Activated B cell treated with CpG ODN at 0.5 μM for 24 hours (primary cell): ENCODE measurements at regions of chr2 and their contacts with region 1.

Region 1: DNA sequence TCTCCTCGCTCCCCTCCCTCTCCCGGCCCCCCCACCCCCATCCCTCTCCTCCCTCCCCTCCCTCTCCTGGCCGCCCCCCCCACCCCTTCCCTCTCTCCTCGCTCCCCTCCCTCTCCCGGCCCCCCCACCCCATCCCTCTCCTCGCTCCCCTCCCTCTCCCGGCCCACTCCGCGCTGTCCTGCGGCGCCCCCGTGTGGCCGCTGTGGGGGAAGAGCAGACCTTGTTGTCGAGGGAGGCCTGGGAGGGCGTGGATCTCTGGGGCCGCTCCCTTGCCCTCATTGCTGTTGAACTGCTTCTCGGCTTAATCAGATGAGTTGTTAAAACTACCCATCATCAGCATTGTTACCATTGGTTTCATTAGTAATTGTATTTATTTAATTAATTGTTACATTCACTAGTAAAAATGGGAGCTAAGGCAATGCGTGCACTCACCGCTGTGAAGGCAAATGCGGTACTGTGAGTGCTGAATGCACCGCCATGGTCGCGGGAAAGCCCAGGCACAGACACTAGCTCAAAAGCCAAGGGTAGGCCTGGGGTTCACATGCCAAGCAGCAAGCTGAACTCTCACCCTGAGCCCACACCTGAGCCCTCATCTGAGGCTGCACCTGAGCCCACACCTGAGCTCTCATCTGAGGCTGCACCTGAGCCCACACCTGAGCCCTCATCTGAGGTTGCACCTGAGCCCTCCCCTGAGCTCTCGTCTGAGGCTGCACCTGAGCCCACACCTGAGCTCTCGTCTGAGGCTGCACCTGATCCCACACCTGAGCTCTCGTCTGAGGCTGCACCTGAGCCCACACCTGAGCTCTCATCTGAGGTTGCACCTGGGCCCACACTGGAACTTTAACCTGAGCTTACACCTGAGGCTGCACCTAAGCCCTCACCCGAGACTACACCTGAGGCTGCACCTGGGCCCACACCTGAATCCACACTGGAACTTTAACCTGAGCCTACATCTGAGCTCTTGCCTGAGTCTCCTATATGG is 8.8 kb downstream of the RTP5 start:
- DNase-seq: peak; percentile 73
- ATAC-seq: no peak
- H3K4me3 Mint-ChIP-seq: no peak overlapping the region
- H3K27ac Mint-ChIP-seq: no peak overlapping the region
- H3K4me1 Mint-ChIP-seq: peaks cover 28% of the 10 kb centered on the region
- H3K27me3 Mint-ChIP-seq: no peaks in the 10 kb centered on the region
- CTCF ChIP-seq: no peak

Region 2: DNA sequence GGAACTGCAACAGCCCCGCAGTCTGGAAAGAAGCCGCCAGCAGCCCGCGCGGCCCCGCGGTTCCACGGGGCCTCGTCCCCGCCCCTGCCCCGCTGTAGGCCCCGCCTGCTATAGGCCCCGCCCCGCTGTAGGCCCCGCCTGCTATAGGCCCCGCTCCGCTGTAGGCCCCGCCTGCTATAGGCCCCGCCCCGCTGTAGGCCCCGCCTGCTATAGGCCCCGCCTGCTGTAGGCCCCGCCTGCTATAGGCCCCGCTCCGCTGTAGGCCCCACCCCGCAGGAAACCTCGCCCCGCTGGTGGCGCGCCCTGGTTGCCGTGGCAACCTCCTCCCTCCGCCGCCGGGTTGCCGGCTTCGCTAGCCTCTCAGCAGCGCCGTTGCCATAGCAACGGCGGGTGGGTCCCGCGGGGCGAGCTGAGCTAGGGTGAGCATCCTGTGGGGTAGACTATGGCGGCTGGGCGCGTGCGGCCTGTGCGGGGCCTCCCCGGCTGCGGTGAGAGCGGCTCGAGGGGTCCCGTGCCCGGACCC is 1046.0 kb before region 1 on chr2:
- CTCF ChIA-PET with region 1: no interaction called
- POLR2A ChIA-PET with region 1: no interaction called
- intact Hi-C with region 1: loop called (anchors 2 kb)
- DNase-seq: peak; percentile 89
- ATAC-seq: peak; percentile 94
- H3K4me3 Mint-ChIP-seq: peak overlapping the region; percentile 55
- H3K27ac Mint-ChIP-seq: no peak overlapping the region
- H3K4me1 Mint-ChIP-seq: peaks cover 5% of the 10 kb centered on the region
- H3K27me3 Mint-ChIP-seq: peaks cover 18% of the 10 kb centered on the region
- CTCF ChIP-seq: no peak

Region 3: DNA sequence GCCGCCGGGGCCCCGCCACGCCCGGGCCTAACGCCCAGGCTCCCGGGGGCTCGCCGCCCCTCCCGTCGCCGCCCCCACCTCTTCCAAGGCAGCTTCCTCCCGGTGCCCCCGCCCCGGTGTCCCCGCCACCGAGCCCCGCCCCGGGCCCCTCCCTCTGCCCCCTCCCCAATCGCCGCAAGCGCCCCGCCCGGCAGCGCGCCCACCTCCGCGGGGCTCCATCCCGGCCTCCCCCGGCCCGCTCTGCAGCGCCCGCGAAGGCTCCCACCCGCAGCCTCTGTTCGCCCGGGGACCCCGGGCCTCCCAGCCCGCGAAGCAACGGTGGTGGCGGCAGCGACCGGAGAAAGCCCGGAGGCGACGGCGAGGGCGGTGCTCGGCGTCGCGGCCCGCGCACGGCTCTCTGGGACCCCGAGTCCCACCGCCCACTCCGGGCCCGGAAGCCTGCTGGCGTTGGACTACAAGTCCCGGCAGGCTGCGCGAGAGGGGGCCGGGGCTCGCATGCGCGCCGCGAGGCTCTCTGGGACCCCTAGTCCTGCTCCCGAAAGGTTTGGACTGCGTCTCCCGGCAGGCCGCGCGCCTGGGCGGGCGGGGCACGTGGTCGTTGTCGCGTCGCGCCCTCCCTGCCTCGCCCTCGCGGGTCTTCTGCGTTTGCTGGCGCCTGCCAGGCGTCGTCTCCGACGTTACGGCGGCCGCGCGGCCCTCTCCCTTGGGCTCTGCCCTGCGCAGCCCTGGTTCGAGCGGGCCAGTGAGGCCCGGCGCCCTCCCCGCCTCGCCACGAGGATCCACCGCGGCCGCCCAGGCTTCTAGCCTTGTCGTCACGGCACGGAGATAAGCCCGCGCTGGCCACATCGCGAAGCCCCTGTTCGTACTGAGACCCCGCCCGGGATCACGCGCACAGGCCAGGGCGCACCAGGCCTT is 369.8 kb before region 1 on chr2 and contains the start of gene STK25:
- CTCF ChIA-PET with region 1: no interaction called
- POLR2A ChIA-PET with region 1: interaction called, 3 read pairs
- intact Hi-C with region 1: loop called (anchors 1 kb)
- DNase-seq: peak; percentile 98
- ATAC-seq: peak; percentile 93
- H3K4me3 Mint-ChIP-seq: peak within 1 kb of the TSS; percentile 84
- H3K27ac Mint-ChIP-seq: peak within 1 kb of the TSS; percentile 68
- H3K4me1 Mint-ChIP-seq: peaks cover 23% of the 10 kb centered on the region
- H3K27me3 Mint-ChIP-seq: no peaks in the 10 kb centered on the region
- CTCF ChIP-seq: no peak
- total RNA-seq, gene STK25: 123 and 151 TPM in 2 replicates

Region 4: GRCh38 chr2:241686649-241687425 is 191.4 kb before region 1 on chr2 and contains the start of gene DTYMK:
- CTCF ChIA-PET with region 1: interaction called, 3 read pairs
- POLR2A ChIA-PET with region 1: interaction called, 13 read pairs
- intact Hi-C with region 1: loop called (anchors 1 kb)
- DNase-seq: peak; percentile 99
- ATAC-seq: peak; percentile 95
- H3K4me3 Mint-ChIP-seq: peak within 1 kb of the TSS; percentile 80
- H3K27ac Mint-ChIP-seq: peak within 1 kb of the TSS; percentile 87
- H3K4me1 Mint-ChIP-seq: peaks cover 28% of the 10 kb centered on the region
- H3K27me3 Mint-ChIP-seq: no peaks in the 10 kb centered on the region
- CTCF ChIP-seq: no peak
- total RNA-seq, gene DTYMK: 29.2 and 34.7 TPM in 2 replicates

Region 5: GRCh38 chr2:241803387-241804325 is 74.6 kb before region 1 on chr2:
- CTCF ChIA-PET with region 1: no interaction called
- POLR2A ChIA-PET with region 1: no interaction called
- intact Hi-C with region 1: loop called (anchors 2 kb)
- DNase-seq: peak; percentile 45
- ATAC-seq: peak; percentile 62
- H3K4me3 Mint-ChIP-seq: peak overlapping the region; percentile 62
- H3K27ac Mint-ChIP-seq: no peak overlapping the region
- H3K4me1 Mint-ChIP-seq: peaks cover 17% of the 10 kb centered on the region
- H3K27me3 Mint-ChIP-seq: peaks cover 6% of the 10 kb centered on the region
- CTCF ChIP-seq: no peak